T-cell (primary cell): ENCODE measurements at regions of chr15 and their contacts with region 1.

Region 1: DNA sequence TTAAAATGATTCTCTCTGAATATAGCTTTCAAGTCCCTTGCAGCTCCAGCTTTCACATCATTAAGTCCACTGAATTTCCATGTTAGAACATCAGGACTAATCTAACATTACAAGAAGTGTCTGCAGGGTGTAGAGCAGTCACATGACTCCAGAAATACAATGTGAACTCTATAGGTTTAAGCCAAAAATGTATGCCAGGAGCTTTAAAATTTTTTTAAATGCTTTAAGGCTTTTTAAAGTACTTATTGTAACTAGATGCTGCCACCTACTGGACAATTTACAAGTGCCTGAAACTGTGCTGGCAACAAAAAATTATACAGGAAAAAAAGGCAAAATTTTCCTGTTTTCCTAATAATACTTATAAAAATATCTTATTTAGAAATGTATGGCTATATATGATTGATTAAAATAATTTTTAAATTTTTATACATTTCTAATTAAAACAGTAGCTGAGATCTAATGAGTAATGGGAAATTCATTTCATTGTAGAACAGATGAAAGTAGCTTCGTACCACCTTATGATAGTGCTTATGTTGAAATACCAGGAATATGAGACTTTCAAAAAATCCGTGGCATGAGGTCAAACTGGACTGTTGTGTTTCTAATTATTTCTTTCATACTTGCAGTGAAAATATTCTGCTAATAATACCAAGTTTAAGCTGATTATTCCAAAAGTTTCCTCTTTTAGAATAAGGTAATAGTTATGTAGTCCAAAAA is 25.7 kb downstream of the FSIP1 start:
- DNase-seq: peak in 7 of 35 experiments; percentile 4 to 77 (median 16)
- ATAC-seq: peak in 2 of 4 experiments; percentile 30 to 42
- H3K4me3 ChIP-seq: no peak overlapping the region
- H3K4me3 Mint-ChIP-seq: no peak overlapping the region
- H3K27ac ChIP-seq: no peak overlapping the region
- H3K27ac Mint-ChIP-seq: no peak overlapping the region
- H3K4me1 ChIP-seq: no peaks in the 10 kb centered on the region
- H3K4me1 Mint-ChIP-seq: peaks cover 0 to 2% (median 0%) of the 10 kb centered on the region in 3 donors
- H3K27me3 ChIP-seq: no peaks in the 10 kb centered on the region
- H3K27me3 Mint-ChIP-seq: peaks cover 0 to 3% of the 10 kb centered on the region in 2 donors

Region 2: GRCh38 chr15:38440353-38441129 is 1316.4 kb before region 1 on chr15:
- CTCF ChIA-PET with region 1: interaction called, 9 to 18 read pairs
- POLR2A ChIA-PET with region 1: no interaction called
- DNase-seq: peak in 34 of 35 experiments; percentile 12 to 88 (median 33)
- ATAC-seq: peak; percentile 82 to 91 (median 88)
- H3K4me3 ChIP-seq: no peak overlapping the region
- H3K4me3 Mint-ChIP-seq: no peak overlapping the region
- H3K27ac ChIP-seq: no peak overlapping the region
- H3K27ac Mint-ChIP-seq: no peak overlapping the region
- H3K4me1 ChIP-seq: peaks cover 0 to 5% of the 10 kb centered on the region in 2 experiments
- H3K4me1 Mint-ChIP-seq: peaks cover 5 to 9% (median 8%) of the 10 kb centered on the region in 3 donors
- H3K27me3 ChIP-seq: peaks cover 0 to 2% of the 10 kb centered on the region in 2 experiments
- H3K27me3 Mint-ChIP-seq: peaks cover 21 to 25% of the 10 kb centered on the region in 2 donors

Region 3: DNA sequence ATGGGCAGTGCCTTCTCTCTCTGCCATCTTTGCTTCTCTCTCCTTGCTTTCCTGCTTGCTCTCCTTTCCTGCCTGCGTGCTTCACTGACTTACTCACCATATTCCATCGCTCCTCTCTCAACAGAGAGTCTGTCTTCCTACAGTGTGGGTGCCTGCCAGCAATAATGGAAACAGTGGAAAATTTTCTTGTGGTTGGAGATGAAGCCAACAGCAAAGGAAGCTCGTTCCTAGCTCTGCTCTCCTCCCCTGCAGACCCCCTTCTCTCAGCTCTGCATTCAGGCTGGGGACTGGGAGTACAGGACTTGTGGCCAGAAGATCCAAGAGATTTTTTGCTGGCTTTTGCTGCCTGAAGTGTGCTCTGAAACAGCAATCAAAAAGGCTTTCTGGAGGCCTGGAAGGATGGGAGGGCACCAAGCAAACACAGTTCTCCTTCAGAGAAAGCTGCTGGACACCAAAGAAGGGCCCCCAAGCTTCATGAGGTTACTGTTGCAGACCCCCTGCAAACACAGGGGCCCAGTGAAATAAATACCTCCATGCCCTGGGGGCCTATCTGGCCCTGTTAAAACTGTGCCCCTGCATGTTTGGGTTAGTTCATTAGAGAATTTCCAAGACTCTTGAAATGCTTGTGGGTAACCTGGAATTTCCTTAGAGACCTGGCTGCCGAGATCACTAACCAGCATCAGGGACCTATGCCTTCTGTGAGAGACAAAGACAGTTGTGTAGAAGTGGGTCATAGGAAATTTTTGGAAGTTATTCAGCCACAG is 1042.5 kb before region 1 on chr15:
- CTCF ChIA-PET with region 1: interaction called, 4 to 10 read pairs
- POLR2A ChIA-PET with region 1: no interaction called
- DNase-seq: no peak
- ATAC-seq: no peak
- H3K4me3 ChIP-seq: no peak overlapping the region
- H3K4me3 Mint-ChIP-seq: no peak overlapping the region
- H3K27ac ChIP-seq: no peak overlapping the region
- H3K27ac Mint-ChIP-seq: no peak overlapping the region
- H3K4me1 ChIP-seq: no peaks in the 10 kb centered on the region
- H3K4me1 Mint-ChIP-seq: no peaks in the 10 kb centered on the region
- H3K27me3 ChIP-seq: no peaks in the 10 kb centered on the region
- H3K27me3 Mint-ChIP-seq: no peaks in the 10 kb centered on the region

Region 4: GRCh38 chr15:39580117-39580484 is 176.9 kb before region 1 on chr15:
- CTCF ChIA-PET with region 1: interaction called, 3 to 18 read pairs
- POLR2A ChIA-PET with region 1: no interaction called
- DNase-seq: peak; percentile 56 to 88 (median 79)
- ATAC-seq: peak; percentile 83 to 90 (median 88)
- H3K4me3 ChIP-seq: peak overlapping the region; percentile 55 to 58
- H3K4me3 Mint-ChIP-seq: peak overlapping the region; percentile 59 to 78 (median 71)
- H3K27ac ChIP-seq: no peak overlapping the region
- H3K27ac Mint-ChIP-seq: no peak overlapping the region
- H3K4me1 ChIP-seq: peaks cover 0 to 24% of the 10 kb centered on the region in 2 experiments
- H3K4me1 Mint-ChIP-seq: peaks cover 16 to 47% (median 18%) of the 10 kb centered on the region in 3 donors
- H3K27me3 ChIP-seq: peaks cover 0 to 40% of the 10 kb centered on the region in 2 experiments
- H3K27me3 Mint-ChIP-seq: peaks cover 41 to 63% of the 10 kb centered on the region in 2 donors

Region 5: DNA sequence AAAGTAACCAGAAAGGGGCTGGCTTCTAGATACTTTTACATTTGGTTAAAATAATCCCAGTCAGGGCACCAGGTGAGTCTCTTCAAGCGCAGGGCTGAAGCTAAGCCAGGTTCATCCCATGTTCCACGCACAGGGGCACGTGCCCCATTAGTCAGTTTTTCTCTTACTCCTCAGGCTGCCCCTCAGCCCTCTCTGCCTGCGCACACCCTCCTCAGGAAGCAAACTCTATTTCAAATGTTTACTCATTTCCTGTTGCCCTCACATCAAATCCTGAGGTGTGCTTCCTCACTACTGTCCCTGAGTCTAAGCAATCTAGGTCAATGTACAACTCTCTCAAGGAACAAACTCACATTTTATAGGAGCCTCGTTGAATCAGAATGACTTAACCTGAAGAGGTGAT is 127.6 kb before region 1 on chr15:
- CTCF ChIA-PET with region 1: interaction called in 1 of 2 experiments, 12 read pairs
- POLR2A ChIA-PET with region 1: no interaction called
- DNase-seq: peak; percentile 27 to 74 (median 49)
- ATAC-seq: peak; percentile 66 to 75 (median 70)
- H3K4me3 ChIP-seq: no peak overlapping the region
- H3K4me3 Mint-ChIP-seq: peak overlapping the region in 1 of 3 donors; percentile 13
- H3K27ac ChIP-seq: peak overlapping the region; percentile 90
- H3K27ac Mint-ChIP-seq: peak overlapping the region; percentile 92 to 98
- H3K4me1 ChIP-seq: peaks cover 0 to 69% of the 10 kb centered on the region in 2 experiments
- H3K4me1 Mint-ChIP-seq: peaks cover 40 to 69% (median 66%) of the 10 kb centered on the region in 3 donors
- H3K27me3 ChIP-seq: no peaks in the 10 kb centered on the region
- H3K27me3 Mint-ChIP-seq: no peaks in the 10 kb centered on the region

Region 6: GRCh38 chr15:39774688-39775267 is 17.8 kb after region 1 on chr15:
- CTCF ChIA-PET with region 1: interaction called in 1 of 2 experiments, 12 read pairs
- POLR2A ChIA-PET with region 1: no interaction called
- DNase-seq: peak in 34 of 35 experiments; percentile 17 to 66 (median 32)
- ATAC-seq: peak; percentile 93 to 99 (median 97)
- H3K4me3 ChIP-seq: no peak overlapping the region
- H3K4me3 Mint-ChIP-seq: peak overlapping the region in 2 of 3 donors; percentile 34
- H3K27ac ChIP-seq: no peak overlapping the region
- H3K27ac Mint-ChIP-seq: peak overlapping the region; percentile 72 to 74
- H3K4me1 ChIP-seq: peaks cover 3 to 12% of the 10 kb centered on the region in 2 experiments
- H3K4me1 Mint-ChIP-seq: peaks cover 17 to 24% (median 19%) of the 10 kb centered on the region in 3 donors
- H3K27me3 ChIP-seq: no peaks in the 10 kb centered on the region
- H3K27me3 Mint-ChIP-seq: peaks cover 2 to 7% of the 10 kb centered on the region in 2 donors